ENCODE measurements at regions of chr20 and their contacts with region 1.

Region 1: GRCh38 chr20:6828794-6829423 is 61.4 kb downstream of the BMP2 start:
- DNase-seq: peak; percentile 74 to 78
- H3K4me3 ChIP-seq: no peak overlapping the region
- H3K27ac ChIP-seq: no peak overlapping the region
- H3K4me1 ChIP-seq: no peaks in the 10 kb centered on the region
- H3K27me3 ChIP-seq: no peaks in the 10 kb centered on the region
- CTCF ChIP-seq: peak in 5 of 6 experiments; percentile 35 to 78 (median 73)
- POLR2A ChIP-seq: no peak

Region 2: GRCh38 chr20:6623989-6624388 is 204.9 kb before region 1 on chr20:
- intact Hi-C with region 1: no loop called
- DNase-seq: no peak
- H3K4me3 ChIP-seq: no peak overlapping the region
- H3K27ac ChIP-seq: no peak overlapping the region
- H3K4me1 ChIP-seq: no peaks in the 10 kb centered on the region
- H3K27me3 ChIP-seq: no peaks in the 10 kb centered on the region
- CTCF ChIP-seq: no peak
- POLR2A ChIP-seq: no peak

Region 3: GRCh38 chr20:7094438-7094997 is 265.6 kb after region 1 on chr20:
- intact Hi-C with region 1: loop called (anchors 10 kb)
- DNase-seq: peak; percentile 54 to 62
- H3K4me3 ChIP-seq: no peak overlapping the region
- H3K27ac ChIP-seq: no peak overlapping the region
- H3K4me1 ChIP-seq: no peaks in the 10 kb centered on the region
- H3K27me3 ChIP-seq: no peaks in the 10 kb centered on the region
- CTCF ChIP-seq: peak; percentile 27 to 76 (median 62)
- POLR2A ChIP-seq: no peak